CD4-positive, alpha-beta T cell (primary cell): ENCODE measurements at regions of chr9 and their contacts with region 1.

Region 1: GRCh38 chr9:34458013-34458958 is at the starts of genes DNAI1 and FAM219A:
- DNase-seq: peak; percentile 97 to 100 (median 99)
- ATAC-seq: peak; percentile 96
- H3K4me3 ChIP-seq: peak within 1 kb of the TSS; percentile 72
- H3K4me3 Mint-ChIP-seq: peak within 1 kb of the TSS; percentile 98
- H3K27ac ChIP-seq: no peak within 1 kb of the TSS
- H3K27ac Mint-ChIP-seq: peak within 1 kb of the TSS; percentile 68
- H3K4me1 ChIP-seq: peaks cover 25% of the 10 kb centered on the region
- H3K4me1 Mint-ChIP-seq: peaks cover 31% of the 10 kb centered on the region
- H3K27me3 ChIP-seq: no peaks in the 10 kb centered on the region
- H3K27me3 Mint-ChIP-seq: peaks cover 9% of the 10 kb centered on the region
- CTCF ChIP-seq: no peak
- total RNA-seq, gene DNAI1: not detected
- total RNA-seq, gene FAM219A: 7.7 to 8.5 TPM

Region 2: DNA sequence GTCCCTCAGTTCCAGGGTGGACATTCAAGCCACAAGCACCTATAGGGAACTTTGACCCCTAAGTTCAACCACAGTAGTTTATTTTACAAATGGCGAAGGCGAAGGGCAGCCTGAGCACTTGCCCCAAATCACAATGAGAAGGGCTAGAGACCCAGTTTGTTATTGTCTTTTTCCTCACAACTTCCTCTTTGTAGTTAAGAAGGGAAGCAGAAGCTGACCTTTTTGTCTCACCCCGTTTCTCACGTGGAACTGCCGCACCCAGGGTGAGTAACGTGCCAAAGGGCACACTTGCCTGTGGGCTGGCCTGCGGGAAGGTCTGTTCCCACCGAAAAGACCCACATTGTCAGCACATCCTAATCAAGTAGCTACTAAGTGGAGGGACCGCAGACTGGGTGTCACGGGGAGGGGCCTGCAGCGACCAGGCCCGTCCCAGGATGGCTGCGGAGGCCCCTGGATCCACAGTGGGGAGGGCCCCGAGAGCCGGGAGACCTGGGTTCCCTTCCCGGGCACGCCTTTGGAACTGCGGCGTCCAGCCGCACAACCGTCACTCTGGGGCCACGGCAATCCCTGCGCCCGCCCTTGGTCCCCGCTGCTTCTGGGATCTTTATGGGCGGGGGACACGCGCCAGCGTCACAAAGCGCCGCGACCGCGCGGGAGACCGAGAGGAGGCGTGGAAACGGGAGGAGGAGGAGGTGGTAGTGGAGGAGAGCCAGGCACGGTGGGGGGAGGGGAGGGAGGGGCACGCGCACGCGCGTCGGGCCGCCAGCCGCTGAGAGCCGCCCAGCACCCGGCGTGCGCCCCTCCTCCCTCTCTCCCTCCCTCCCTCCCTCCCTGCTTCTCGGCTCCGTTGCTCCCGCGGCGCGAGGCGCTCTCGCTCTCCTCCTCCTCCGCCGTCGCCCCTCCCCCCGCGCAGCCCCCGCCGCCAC is 641.7 kb before region 1 on chr9 and contains the start of gene UBE2R2:
- CTCF ChIA-PET with region 1: no interaction called
- POLR2A ChIA-PET with region 1: no interaction called
- intact Hi-C with region 1: loop called in 1 of 2 experiments (anchors 5 kb)
- DNase-seq: peak; percentile 89 to 99 (median 92)
- ATAC-seq: peak; percentile 80
- H3K4me3 ChIP-seq: peak within 1 kb of the TSS; percentile 64
- H3K4me3 Mint-ChIP-seq: peak within 1 kb of the TSS; percentile 96
- H3K27ac ChIP-seq: peak within 1 kb of the TSS; percentile 96
- H3K27ac Mint-ChIP-seq: peak within 1 kb of the TSS; percentile 98
- H3K4me1 ChIP-seq: peaks cover 34% of the 10 kb centered on the region
- H3K4me1 Mint-ChIP-seq: peaks cover 59% of the 10 kb centered on the region
- H3K27me3 ChIP-seq: no peaks in the 10 kb centered on the region
- H3K27me3 Mint-ChIP-seq: no peaks in the 10 kb centered on the region
- CTCF ChIP-seq: no peak
- total RNA-seq, gene UBE2R2: 22.7 to 24.5 TPM

Region 3: DNA sequence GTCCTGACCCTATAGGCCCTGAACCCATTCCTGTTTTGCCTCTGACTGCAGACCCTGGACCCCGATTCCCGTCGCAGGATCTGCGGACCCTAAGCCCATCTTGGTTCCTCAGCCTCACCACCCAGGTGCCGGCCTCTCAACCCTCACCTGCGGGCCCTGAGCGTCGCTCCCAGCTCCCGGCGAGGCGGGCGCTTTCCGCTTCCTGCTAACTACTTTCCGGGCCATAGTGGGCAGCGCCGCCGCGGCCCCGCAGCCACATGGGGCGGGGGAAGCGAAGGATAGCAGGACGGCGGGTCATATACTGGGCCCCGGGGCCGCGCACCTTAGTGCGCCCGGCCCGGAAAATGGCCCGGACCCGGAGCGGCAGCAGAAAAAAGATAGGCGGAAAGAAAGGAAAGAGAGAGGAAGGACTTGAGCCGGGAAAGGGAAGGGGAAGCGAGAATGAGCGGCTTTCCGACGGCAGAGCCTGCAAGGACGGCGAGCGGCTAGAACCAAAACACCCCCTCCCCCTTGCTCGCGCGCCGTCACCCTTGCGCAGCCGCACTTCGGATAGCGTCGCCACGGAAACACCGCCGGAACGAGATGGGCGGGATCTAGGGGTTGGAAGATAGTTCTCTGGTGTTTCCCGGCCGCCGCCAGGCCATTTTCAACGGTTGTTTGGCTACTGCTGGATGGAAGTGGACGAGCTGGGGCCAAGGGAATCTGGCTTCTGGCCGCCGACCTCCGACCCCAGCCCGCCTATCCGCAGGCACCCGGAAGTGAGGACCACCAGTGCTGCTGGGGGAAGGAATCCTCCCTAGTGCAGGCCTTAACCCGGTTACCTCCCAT is 331.9 kb before region 1 on chr9 and contains the start of gene DCAF12:
- CTCF ChIA-PET with region 1: no interaction called
- POLR2A ChIA-PET with region 1: no interaction called
- intact Hi-C with region 1: loop called in 1 of 2 experiments (anchors 5 kb)
- DNase-seq: peak; percentile 81 to 97 (median 88)
- ATAC-seq: peak; percentile 94
- H3K4me3 ChIP-seq: peak within 1 kb of the TSS; percentile 86
- H3K4me3 Mint-ChIP-seq: peak within 1 kb of the TSS; percentile 100
- H3K27ac ChIP-seq: peak within 1 kb of the TSS; percentile 86 to 88
- H3K27ac Mint-ChIP-seq: peak within 1 kb of the TSS; percentile 99
- H3K4me1 ChIP-seq: peaks cover 45% of the 10 kb centered on the region
- H3K4me1 Mint-ChIP-seq: peaks cover 57% of the 10 kb centered on the region
- H3K27me3 ChIP-seq: no peaks in the 10 kb centered on the region
- H3K27me3 Mint-ChIP-seq: no peaks in the 10 kb centered on the region
- CTCF ChIP-seq: no peak
- total RNA-seq, gene DCAF12: 5.4 to 5.9 TPM

Region 4: DNA sequence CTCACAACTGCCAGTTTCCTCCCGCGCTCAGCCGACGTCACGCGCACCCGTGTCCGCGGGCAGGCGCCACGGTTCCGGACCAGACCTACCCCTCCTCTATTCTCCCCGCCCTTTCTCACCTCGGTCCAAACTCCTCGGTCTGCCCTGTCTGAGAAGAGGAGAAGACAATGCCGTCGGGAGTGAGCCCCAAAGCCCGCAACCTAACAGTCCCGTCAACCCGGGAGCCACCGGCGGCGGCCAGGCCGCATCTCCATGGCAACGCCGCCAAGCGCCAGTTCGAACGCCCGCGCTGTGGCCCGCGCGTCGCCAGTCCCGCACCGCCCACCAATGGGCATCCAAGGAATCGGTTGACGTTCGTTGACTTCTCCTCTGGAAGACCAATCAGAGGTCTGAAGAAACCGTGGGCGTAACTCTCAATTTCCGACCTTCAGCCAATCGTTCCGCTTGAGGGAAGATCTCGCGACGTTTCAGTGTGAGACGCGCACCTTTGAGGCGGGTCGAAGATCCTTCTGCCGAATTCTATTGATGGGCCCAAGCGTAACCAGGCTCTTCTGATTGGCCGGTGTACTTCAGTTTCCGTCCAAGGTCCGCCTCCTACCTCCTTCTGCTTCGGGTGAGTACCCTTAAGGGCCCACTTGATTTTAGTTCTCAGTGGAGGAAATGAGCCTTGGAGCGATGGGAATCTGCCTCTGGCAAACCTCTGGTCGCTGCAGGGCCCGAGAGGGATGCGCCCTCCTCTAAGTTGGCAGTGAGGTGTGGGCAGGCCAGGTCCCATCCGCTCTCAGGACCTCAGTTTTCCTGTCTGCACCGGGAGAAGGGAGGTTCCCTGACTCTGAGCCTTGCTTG is 129.1 kb before region 1 on chr9 and contains the starts of genes KIF24 and NUDT2:
- CTCF ChIA-PET with region 1: no interaction called
- POLR2A ChIA-PET with region 1: no interaction called
- intact Hi-C with region 1: loop called (anchors 1 to 2 kb)
- DNase-seq: peak; percentile 88 to 100 (median 92)
- ATAC-seq: peak; percentile 92
- H3K4me3 ChIP-seq: peak within 1 kb of the TSS; percentile 93
- H3K4me3 Mint-ChIP-seq: peak within 1 kb of the TSS; percentile 90
- H3K27ac ChIP-seq: peak within 1 kb of the TSS; percentile 76 to 86
- H3K27ac Mint-ChIP-seq: peak within 1 kb of the TSS; percentile 90
- H3K4me1 ChIP-seq: peaks cover 21% of the 10 kb centered on the region
- H3K4me1 Mint-ChIP-seq: peaks cover 42% of the 10 kb centered on the region
- H3K27me3 ChIP-seq: no peaks in the 10 kb centered on the region
- H3K27me3 Mint-ChIP-seq: no peaks in the 10 kb centered on the region
- CTCF ChIP-seq: no peak
- total RNA-seq, gene KIF24: 0.05 to 0.14 TPM
- total RNA-seq, gene NUDT2: 4.5 to 7.2 TPM

Region 5: DNA sequence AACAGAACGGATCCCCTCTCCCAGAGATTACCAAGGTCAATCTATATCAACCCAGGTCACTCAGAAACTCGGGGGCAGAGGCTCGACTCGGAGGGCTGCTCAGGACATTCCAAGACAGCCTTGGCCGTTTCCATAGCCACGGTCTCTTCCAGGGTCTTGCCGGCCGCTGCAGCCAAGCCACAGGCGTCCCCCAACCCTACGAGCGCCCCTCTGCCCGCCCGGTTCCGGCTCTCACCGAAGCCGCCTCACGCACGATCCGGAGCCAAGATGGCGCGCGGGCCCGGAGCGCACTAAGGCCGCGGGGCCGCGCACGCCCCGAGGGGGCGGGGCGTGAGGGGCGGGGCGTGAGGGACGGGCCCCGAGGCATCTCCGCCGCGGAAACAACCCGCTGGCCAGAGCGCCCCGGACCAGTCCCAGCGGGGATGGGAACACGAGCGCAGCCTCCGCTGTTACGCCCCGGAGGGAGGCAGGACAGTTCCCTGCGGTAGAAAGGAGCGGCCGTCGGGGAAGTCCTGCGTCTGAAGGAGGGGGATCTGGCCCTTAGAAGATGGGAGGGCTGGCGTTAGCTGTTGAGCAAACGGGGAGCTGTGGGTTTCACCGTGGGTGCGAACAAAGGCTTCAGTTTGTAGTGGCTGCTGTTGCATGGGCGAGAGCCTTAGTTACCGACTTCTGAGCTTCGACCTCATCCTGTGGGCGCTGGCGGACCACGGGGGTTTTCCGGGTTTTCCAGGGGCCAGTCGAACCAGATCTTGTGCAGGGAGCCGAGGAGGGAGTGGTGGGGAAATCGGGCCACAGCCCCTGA is 153.7 kb after region 1 on chr9 and contains the start of gene RPP25L:
- CTCF ChIA-PET with region 1: no interaction called
- POLR2A ChIA-PET with region 1: no interaction called
- intact Hi-C with region 1: loop called (anchors 2 to 5 kb)
- DNase-seq: peak; percentile 64 to 94 (median 82)
- ATAC-seq: peak; percentile 91
- H3K4me3 ChIP-seq: peak within 1 kb of the TSS; percentile 95
- H3K4me3 Mint-ChIP-seq: peak within 1 kb of the TSS; percentile 84
- H3K27ac ChIP-seq: peak within 1 kb of the TSS; percentile 79 to 83
- H3K27ac Mint-ChIP-seq: peak within 1 kb of the TSS; percentile 40
- H3K4me1 ChIP-seq: peaks cover 28% of the 10 kb centered on the region
- H3K4me1 Mint-ChIP-seq: peaks cover 24% of the 10 kb centered on the region
- H3K27me3 ChIP-seq: no peaks in the 10 kb centered on the region
- H3K27me3 Mint-ChIP-seq: no peaks in the 10 kb centered on the region
- CTCF ChIP-seq: no peak
- total RNA-seq, gene RPP25L: 4.6 to 5.7 TPM

Region 6: GRCh38 chr9:34994260-34994899 is 536.1 kb after region 1 on chr9:
- CTCF ChIA-PET with region 1: no interaction called
- POLR2A ChIA-PET with region 1: no interaction called
- intact Hi-C with region 1: loop called in 1 of 2 experiments (anchors 5 kb)
- DNase-seq: no peak
- ATAC-seq: no peak
- H3K4me3 ChIP-seq: no peak overlapping the region
- H3K4me3 Mint-ChIP-seq: no peak overlapping the region
- H3K27ac ChIP-seq: no peak overlapping the region
- H3K27ac Mint-ChIP-seq: no peak overlapping the region
- H3K4me1 ChIP-seq: peaks cover 11% of the 10 kb centered on the region
- H3K4me1 Mint-ChIP-seq: peaks cover 8% of the 10 kb centered on the region
- H3K27me3 ChIP-seq: no peaks in the 10 kb centered on the region
- H3K27me3 Mint-ChIP-seq: no peaks in the 10 kb centered on the region
- CTCF ChIP-seq: peak; percentile 30